Transverse colon (tissue), 4 donors: ENCODE measurements at regions of chr6 and their contacts with region 1.

Region 1: GRCh38 chr6:161393839-161394364 is 120.0 kb upstream of the AGPAT4 start:
- DNase-seq: peak; percentile 28
- H3K4me3 ChIP-seq: no peak overlapping the region
- H3K27ac ChIP-seq: no peak overlapping the region
- H3K4me1 ChIP-seq: peaks cover 0 to 4% (median 0%) of the 10 kb centered on the region in 4 donors
- H3K27me3 ChIP-seq: no peaks in the 10 kb centered on the region
- CTCF ChIP-seq: peak; percentile 41 to 53 (median 51)
- EP300 ChIP-seq: no peak
- POLR2A ChIP-seq: no peak

Region 2: DNA sequence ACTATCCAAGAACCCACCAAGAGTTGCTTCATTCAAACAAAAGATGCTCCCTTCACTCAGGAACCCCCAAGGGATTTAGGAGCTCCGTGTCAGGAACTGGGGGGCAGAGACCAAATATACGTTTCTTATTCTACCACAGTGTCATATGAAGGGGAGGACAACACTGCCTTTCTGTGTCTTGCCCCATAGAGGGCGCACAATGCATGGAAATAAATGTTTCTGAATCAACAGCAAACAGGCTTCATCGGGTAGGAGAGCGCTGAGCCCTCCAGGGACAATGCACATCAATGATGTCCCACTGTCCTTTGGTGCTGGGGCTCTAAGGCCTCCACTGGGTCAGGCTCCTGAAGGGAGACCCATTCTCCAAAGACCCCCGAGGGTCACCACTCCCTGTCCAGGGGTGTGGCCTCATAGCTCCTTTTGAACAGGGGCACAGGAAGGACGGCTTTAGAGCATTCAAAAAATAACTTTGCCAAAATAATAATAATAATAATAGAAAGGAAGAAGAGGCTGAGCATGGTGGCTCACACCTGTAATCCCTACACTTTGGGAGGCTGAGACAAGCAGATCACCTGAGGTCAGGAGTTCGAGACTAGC is 660.8 kb before region 1 on chr6:
- in situ Hi-C with region 1: loop called in 1 of 4 experiments (anchors 25 kb)
- intact Hi-C with region 1: no loop called
- DNase-seq: peak; percentile 13
- H3K4me3 ChIP-seq: no peak overlapping the region
- H3K27ac ChIP-seq: no peak overlapping the region
- H3K4me1 ChIP-seq: no peaks in the 10 kb centered on the region
- H3K27me3 ChIP-seq: no peaks in the 10 kb centered on the region
- CTCF ChIP-seq: peak; percentile 33 to 56 (median 50)
- EP300 ChIP-seq: no peak
- POLR2A ChIP-seq: no peak

Region 3: DNA sequence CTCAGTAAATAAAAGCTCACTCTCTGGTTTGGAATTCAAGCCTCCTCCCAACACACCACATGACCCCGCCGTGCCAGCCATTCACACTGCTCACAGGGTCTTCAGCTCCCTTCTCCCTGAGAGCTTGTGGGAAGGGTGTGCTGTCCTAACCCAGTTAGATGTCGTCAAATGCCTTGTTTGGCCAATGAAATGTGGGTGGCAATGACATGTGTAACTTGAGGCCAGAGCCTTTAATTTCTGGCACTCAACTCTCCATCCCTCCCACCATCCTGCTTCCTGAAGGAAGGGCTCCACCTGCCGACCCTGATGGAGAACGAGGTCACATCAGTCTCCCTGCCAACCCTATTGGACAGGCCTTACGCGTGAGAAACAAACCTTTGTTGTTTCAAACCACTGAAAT is 104.5 kb after region 1 on chr6:
- in situ Hi-C with region 1: no loop called
- intact Hi-C with region 1: no loop called
- DNase-seq: no peak
- H3K4me3 ChIP-seq: no peak overlapping the region
- H3K27ac ChIP-seq: no peak overlapping the region
- H3K4me1 ChIP-seq: no peaks in the 10 kb centered on the region
- H3K27me3 ChIP-seq: no peaks in the 10 kb centered on the region
- CTCF ChIP-seq: no peak
- EP300 ChIP-seq: no peak
- POLR2A ChIP-seq: no peak

Region 4: DNA sequence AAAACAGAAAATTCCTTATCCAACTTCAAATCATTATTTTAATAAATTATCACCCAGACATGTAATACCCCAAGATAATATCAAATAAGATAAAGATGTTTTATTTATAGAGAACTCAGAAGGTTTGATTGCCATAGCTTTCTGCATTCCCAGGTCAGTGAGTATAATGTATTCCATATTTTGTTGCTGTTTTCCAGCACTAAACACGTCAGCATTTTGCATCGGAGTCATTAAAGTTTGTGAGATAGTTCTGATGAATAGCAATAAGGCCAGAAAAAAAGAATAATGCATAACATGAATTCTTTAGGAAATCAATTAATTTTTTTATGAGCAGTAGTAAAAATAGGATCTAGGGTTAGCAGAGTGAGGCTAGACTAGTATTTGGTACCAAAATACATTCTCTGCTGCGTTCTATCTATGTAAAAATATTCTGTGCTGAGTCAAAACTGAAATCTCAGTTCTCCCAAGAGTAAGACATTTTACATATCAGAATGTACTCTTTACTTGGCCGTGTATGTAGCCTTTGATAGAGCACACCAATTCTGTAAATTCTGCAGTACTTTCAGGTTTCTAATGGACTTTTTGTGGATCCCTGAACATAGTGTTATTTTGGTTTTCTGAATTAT is 149.9 kb after region 1 on chr6:
- in situ Hi-C with region 1: no loop called
- intact Hi-C with region 1: no loop called
- DNase-seq: no peak
- H3K4me3 ChIP-seq: no peak overlapping the region
- H3K27ac ChIP-seq: no peak overlapping the region
- H3K4me1 ChIP-seq: no peaks in the 10 kb centered on the region
- H3K27me3 ChIP-seq: no peaks in the 10 kb centered on the region
- CTCF ChIP-seq: no peak
- EP300 ChIP-seq: no peak
- POLR2A ChIP-seq: no peak